ENCODE measurements at regions of chr4 and their contacts with region 1.

Region 1: DNA sequence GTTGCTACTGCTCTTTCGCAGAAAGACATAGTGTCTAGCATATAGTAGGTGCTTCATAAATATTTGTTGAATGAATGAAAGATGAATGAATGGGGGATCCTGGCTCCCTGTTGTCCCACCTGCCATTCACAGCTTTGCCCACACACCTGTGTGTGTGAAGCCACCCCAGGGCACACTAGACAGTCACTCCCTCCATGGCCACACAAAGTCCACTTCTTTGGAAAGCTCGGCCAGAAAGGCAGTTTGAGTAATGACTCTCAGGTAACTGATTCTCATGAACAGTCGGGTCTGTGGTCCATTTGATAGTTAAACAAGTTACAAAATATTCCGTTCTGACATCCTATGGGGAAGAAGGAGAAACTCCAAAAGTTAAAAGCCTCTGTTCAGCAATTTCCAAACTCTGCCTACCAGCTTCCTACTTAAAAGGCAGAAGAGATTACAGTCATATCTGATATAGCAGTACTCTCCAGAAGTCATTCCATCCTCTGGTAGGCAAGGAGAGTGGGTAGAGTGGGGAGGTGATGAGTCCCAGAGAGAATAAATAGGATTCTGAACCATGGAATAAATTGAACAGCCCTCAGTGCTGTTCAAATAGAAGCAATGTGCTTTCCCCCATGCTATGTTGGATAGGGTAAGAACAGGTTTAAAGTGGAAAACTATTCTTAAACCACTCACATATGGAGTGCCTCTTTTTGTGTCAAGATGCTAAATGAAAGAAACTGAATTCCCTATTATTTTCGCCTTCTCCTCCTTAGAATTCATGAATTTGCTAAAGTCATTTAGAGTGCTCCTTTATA is 204.9 kb upstream of the GALNT7 start:
- DNase-seq: no peak
- H3K4me3 ChIP-seq: no peak overlapping the region
- H3K27ac ChIP-seq: no peak overlapping the region
- H3K4me1 ChIP-seq: peaks cover 13% of the 10 kb centered on the region
- H3K27me3 ChIP-seq: no peaks in the 10 kb centered on the region
- CTCF ChIP-seq: no peak

Region 2: DNA sequence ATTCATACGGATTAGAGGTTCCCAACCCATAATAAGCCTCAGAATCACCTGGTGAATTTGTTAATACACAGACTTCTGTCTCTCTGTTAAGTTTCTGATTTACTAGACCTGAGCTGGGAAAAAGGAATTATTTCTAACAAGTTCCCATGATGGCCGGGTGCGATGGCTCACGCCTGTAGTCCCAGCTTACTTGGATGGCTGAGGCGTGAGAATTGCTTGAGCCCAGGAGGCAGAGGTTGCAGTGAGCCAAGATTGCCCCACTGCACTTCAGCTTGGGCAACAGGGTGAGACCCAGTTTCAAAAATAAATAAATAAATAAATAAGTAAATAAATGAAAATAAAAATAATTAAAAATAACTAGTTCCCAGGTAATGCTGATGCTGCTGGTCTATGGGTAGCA is 738.2 kb before region 1 on chr4:
- CTCF ChIA-PET with region 1: no interaction called
- POLR2A ChIA-PET with region 1: no interaction called
- intact Hi-C with region 1: no loop called
- DNase-seq: no peak
- H3K4me3 ChIP-seq: no peak overlapping the region
- H3K27ac ChIP-seq: no peak overlapping the region
- H3K4me1 ChIP-seq: no peaks in the 10 kb centered on the region
- H3K27me3 ChIP-seq: peaks cover 14% of the 10 kb centered on the region
- CTCF ChIP-seq: no peak

Region 3: GRCh38 chr4:172654457-172654856 is 309.2 kb before region 1 on chr4:
- CTCF ChIA-PET with region 1: no interaction called
- POLR2A ChIA-PET with region 1: no interaction called
- intact Hi-C with region 1: no loop called
- DNase-seq: no peak
- H3K4me3 ChIP-seq: no peak overlapping the region
- H3K27ac ChIP-seq: no peak overlapping the region
- H3K4me1 ChIP-seq: no peaks in the 10 kb centered on the region
- H3K27me3 ChIP-seq: no peaks in the 10 kb centered on the region
- CTCF ChIP-seq: no peak

Region 4: DNA sequence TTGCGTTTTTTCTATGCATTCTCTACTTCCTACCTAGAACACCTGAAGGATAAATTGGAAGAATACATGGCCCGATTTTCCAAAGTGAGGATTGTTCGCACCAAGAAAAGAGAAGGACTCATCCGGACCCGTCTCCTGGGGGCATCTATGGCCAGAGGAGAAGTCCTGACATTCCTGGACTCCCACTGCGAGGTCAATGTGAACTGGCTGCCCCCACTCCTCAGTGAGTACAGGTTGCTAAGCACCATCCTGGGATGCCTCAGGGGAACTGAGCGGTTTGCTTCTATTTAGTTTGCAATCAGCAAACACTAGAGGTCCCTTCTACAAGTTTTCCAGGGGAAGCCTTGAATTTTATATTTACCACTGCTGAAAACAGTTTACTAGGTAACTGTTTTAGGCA is 154.4 kb before region 1 on chr4:
- CTCF ChIA-PET with region 1: no interaction called
- POLR2A ChIA-PET with region 1: no interaction called
- intact Hi-C with region 1: no loop called
- DNase-seq: no peak
- H3K4me3 ChIP-seq: no peak overlapping the region
- H3K27ac ChIP-seq: no peak overlapping the region
- H3K4me1 ChIP-seq: no peaks in the 10 kb centered on the region
- H3K27me3 ChIP-seq: no peaks in the 10 kb centered on the region
- CTCF ChIP-seq: no peak

Region 5: GRCh38 chr4:172819353-172819752 is 144.3 kb before region 1 on chr4:
- CTCF ChIA-PET with region 1: no interaction called
- POLR2A ChIA-PET with region 1: interaction called, 13 read pairs
- intact Hi-C with region 1: no loop called
- DNase-seq: no peak
- H3K4me3 ChIP-seq: no peak overlapping the region
- H3K27ac ChIP-seq: no peak overlapping the region
- H3K4me1 ChIP-seq: no peaks in the 10 kb centered on the region
- H3K27me3 ChIP-seq: no peaks in the 10 kb centered on the region
- CTCF ChIP-seq: no peak

Measured in A673 (cell line).